ENCODE measurements at regions of chrX and their contacts with region 1.

Region 1: DNA sequence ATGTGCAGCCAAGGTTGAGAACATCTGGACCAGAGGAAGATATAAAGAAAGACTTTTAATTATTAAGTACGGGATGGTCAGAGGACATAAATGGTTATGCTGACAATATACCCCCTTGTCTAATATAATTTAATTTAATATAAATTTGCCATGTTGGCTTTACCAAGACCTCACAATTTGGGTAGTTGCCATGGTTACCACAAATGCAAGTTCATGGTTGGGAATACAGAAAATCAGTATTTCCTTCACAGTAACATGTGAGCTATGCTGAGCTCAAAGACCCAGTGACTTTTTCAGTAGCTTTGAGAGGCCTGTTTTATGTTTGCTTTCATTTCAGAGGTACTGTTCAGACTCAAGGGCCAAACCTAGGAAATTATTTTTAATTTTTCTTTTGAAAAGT is 223.0 kb downstream of the CBLL2 start:
- DNase-seq: no peak
- ATAC-seq: no peak
- H3K4me3 ChIP-seq: no peak overlapping the region
- H3K27ac ChIP-seq: no peak overlapping the region
- H3K4me1 ChIP-seq: no peaks in the 10 kb centered on the region
- H3K27me3 ChIP-seq: no peaks in the 10 kb centered on the region
- CTCF ChIP-seq: no peak
- POLR2A ChIP-seq: no peak

Region 2: GRCh38 chrX:22559506-22559905 is 63.7 kb after region 1 on chrX:
- in situ Hi-C with region 1: no loop called
- intact Hi-C with region 1: loop called (anchors 10 kb)
- DNase-seq: no peak
- ATAC-seq: no peak
- H3K4me3 ChIP-seq: no peak overlapping the region
- H3K27ac ChIP-seq: no peak overlapping the region
- H3K4me1 ChIP-seq: no peaks in the 10 kb centered on the region
- H3K27me3 ChIP-seq: no peaks in the 10 kb centered on the region
- CTCF ChIP-seq: no peak
- POLR2A ChIP-seq: no peak

Measured in gastrocnemius medialis (tissue), 4 donors.